Caco-2 (cell line): ENCODE measurements at regions of chr5 and their contacts with region 1.

Region 1: GRCh38 chr5:122515709-122516431 is 203.8 kb downstream of the SNCAIP start:
- DNase-seq: peak; percentile 68 to 71
- H3K4me3 ChIP-seq: peak overlapping the region; percentile 26
- H3K4me3 Mint-ChIP-seq: peak overlapping the region; percentile 91
- H3K27ac Mint-ChIP-seq: peak overlapping the region; percentile 90
- H3K4me1 ChIP-seq: peaks cover 7% of the 10 kb centered on the region
- H3K4me1 Mint-ChIP-seq: no peaks in the 10 kb centered on the region
- H3K27me3 ChIP-seq: no peaks in the 10 kb centered on the region
- H3K27me3 Mint-ChIP-seq: peaks cover 4% of the 10 kb centered on the region
- CTCF ChIP-seq: peak; percentile 72 to 83

Region 2: GRCh38 chr5:122541388-122541787 is 25.5 kb after region 1 on chr5:
- CTCF ChIA-PET with region 1: no interaction called
- POLR2A ChIA-PET with region 1: no interaction called
- intact Hi-C with region 1: no loop called
- DNase-seq: no peak
- H3K4me3 ChIP-seq: no peak overlapping the region
- H3K4me3 Mint-ChIP-seq: no peak overlapping the region
- H3K27ac Mint-ChIP-seq: no peak overlapping the region
- H3K4me1 ChIP-seq: no peaks in the 10 kb centered on the region
- H3K4me1 Mint-ChIP-seq: no peaks in the 10 kb centered on the region
- H3K27me3 ChIP-seq: no peaks in the 10 kb centered on the region
- H3K27me3 Mint-ChIP-seq: peaks cover 10% of the 10 kb centered on the region
- CTCF ChIP-seq: no peak

Region 3: DNA sequence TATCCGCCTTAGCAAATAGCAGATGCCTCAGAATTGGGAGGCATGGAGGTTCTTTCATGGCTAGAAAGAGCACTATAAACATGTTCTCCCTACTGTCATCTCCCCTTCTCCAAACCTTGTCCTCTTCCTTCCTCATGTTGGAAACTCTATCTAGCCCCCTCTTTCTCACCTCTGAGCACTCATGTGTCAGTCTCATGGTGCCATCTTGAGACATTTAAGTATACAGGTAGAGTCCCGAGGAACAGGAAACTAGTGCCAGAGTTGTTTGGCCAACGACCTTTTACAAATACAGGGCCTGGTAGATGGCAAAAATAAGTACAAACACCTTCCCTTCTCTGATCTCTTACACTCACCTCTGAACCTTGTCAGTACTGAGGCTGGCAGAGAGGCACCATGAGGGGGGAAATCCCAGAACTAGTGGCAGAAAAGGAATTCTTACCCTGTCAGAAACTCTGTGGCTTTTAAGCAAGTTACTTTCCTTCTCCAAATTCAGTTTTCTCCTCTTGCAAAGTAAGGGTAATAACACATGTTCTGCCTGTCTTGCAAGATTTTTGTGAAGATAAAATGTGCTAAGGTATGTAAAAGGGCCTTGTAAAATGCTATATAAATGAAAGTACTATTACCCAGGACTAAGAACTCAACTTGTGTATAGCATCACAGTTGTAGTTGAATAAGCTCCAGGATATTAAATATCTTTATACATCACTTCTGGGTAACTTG is 164.9 kb after region 1 on chr5:
- CTCF ChIA-PET with region 1: no interaction called
- POLR2A ChIA-PET with region 1: no interaction called
- intact Hi-C with region 1: loop called (anchors 2 kb)
- DNase-seq: peak in 1 of 2 experiments; percentile 5
- H3K4me3 ChIP-seq: no peak overlapping the region
- H3K4me3 Mint-ChIP-seq: no peak overlapping the region
- H3K27ac Mint-ChIP-seq: no peak overlapping the region
- H3K4me1 ChIP-seq: 0 out of 2 replicates have a peak, but pooled peaks cover 7% of the 10 kb centered on the region
- H3K4me1 Mint-ChIP-seq: no peaks in the 10 kb centered on the region
- H3K27me3 ChIP-seq: no peaks in the 10 kb centered on the region
- H3K27me3 Mint-ChIP-seq: peaks cover 2% of the 10 kb centered on the region
- CTCF ChIP-seq: no peak

Region 4: GRCh38 chr5:122845229-122846050 is 329.6 kb after region 1 on chr5 and contains the start of gene SNX24:
- CTCF ChIA-PET with region 1: no interaction called
- POLR2A ChIA-PET with region 1: no interaction called
- intact Hi-C with region 1: loop called (anchors 2 kb)
- DNase-seq: peak; percentile 86 to 90
- H3K4me3 ChIP-seq: peak within 1 kb of the TSS; percentile 93
- H3K4me3 Mint-ChIP-seq: peak within 1 kb of the TSS; percentile 78
- H3K27ac Mint-ChIP-seq: peak within 1 kb of the TSS; percentile 87
- H3K4me1 ChIP-seq: peaks cover 39% of the 10 kb centered on the region
- H3K4me1 Mint-ChIP-seq: peaks cover 36% of the 10 kb centered on the region
- H3K27me3 ChIP-seq: no peaks in the 10 kb centered on the region
- H3K27me3 Mint-ChIP-seq: no peaks in the 10 kb centered on the region
- CTCF ChIP-seq: no peak
- total RNA-seq, gene SNX24: 36.7 and 38.4 TPM in 2 replicates

Region 5: DNA sequence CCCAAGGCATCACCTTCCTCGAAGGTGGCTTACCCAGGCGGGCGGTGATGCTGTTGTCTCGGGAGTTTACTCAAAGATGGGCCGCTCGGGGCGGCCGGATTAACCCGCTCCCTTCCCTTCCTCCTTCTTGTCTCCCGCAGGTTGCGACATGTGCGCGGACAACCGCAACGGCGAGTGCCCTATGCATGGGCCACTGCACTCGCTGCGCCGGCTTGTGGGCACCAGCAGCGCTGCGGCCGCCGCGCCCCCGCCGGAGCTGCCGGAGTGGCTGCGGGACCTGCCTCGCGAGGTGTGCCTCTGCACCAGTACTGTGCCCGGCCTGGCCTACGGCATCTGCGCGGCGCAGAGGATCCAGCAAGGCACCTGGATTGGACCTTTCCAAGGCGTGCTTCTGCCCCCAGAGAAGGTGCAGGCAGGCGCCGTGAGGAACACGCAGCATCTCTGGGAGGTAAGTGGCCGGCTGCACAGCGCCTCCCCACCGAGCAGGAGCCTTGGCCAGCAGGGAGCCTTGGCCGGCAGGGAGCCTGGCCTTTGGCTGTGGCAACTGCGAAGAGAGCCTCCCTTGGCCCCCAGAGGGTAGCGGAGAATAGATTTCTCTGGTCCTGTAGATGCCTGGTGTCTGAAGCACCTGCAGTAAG is 583.8 kb after region 1 on chr5:
- CTCF ChIA-PET with region 1: no interaction called
- POLR2A ChIA-PET with region 1: no interaction called
- intact Hi-C with region 1: loop called (anchors 2 kb)
- DNase-seq: peak in 1 of 2 experiments; percentile 69
- H3K4me3 ChIP-seq: peak overlapping the region; percentile 40
- H3K4me3 Mint-ChIP-seq: peak overlapping the region; percentile 70
- H3K27ac Mint-ChIP-seq: no peak overlapping the region
- H3K4me1 ChIP-seq: no peaks in the 10 kb centered on the region
- H3K4me1 Mint-ChIP-seq: peaks cover 7% of the 10 kb centered on the region
- H3K27me3 ChIP-seq: no peaks in the 10 kb centered on the region
- H3K27me3 Mint-ChIP-seq: peaks cover 4% of the 10 kb centered on the region
- CTCF ChIP-seq: peak in 1 of 2 experiments; percentile 40

Region 6: GRCh38 chr5:123157791-123158581 is 642.1 kb after region 1 on chr5:
- CTCF ChIA-PET with region 1: no interaction called
- POLR2A ChIA-PET with region 1: no interaction called
- intact Hi-C with region 1: loop called (anchors 5 kb)
- DNase-seq: no peak
- H3K4me3 ChIP-seq: no peak overlapping the region
- H3K4me3 Mint-ChIP-seq: no peak overlapping the region
- H3K27ac Mint-ChIP-seq: no peak overlapping the region
- H3K4me1 ChIP-seq: no peaks in the 10 kb centered on the region; the same call in 1 of the 2 replicates
- H3K4me1 Mint-ChIP-seq: peaks cover 5% of the 10 kb centered on the region
- H3K27me3 ChIP-seq: no peaks in the 10 kb centered on the region
- H3K27me3 Mint-ChIP-seq: peaks cover 4% of the 10 kb centered on the region
- CTCF ChIP-seq: no peak

Region 7: DNA sequence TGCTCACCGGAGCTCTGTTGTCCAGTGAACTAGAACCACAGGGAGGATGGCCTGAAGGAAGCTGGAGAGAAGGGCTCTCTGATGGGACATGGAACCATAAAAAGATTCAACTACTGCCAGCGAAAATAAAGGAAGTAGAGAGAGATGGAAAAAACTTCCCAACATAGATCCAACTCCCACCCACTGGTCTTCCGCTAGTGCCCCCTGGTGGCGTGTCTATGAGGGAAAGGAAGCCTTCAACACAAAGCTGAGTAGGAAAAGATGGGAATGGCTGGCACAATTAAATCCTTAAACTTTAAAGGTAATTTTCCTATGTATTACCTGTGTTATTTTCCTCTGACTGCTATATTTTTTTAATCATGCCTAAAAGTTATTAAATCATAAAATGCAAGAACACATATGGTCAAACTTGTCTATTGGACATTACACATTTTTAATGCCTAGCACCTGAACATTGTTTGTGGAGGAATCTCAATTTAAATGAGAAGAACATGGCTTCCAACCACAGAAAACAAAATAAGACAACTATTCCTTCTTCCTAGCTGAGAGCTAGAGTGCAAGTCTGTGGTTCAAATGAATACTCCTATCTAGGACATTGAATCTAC is 855.8 kb after region 1 on chr5:
- CTCF ChIA-PET with region 1: interaction called, 6 read pairs
- POLR2A ChIA-PET with region 1: no interaction called
- intact Hi-C with region 1: loop called (anchors 2 kb)
- DNase-seq: peak; percentile 49 to 69
- H3K4me3 ChIP-seq: no peak overlapping the region
- H3K4me3 Mint-ChIP-seq: no peak overlapping the region
- H3K27ac Mint-ChIP-seq: no peak overlapping the region
- H3K4me1 ChIP-seq: peaks cover 20% of the 10 kb centered on the region
- H3K4me1 Mint-ChIP-seq: peaks cover 16% of the 10 kb centered on the region
- H3K27me3 ChIP-seq: no peaks in the 10 kb centered on the region
- H3K27me3 Mint-ChIP-seq: no peaks in the 10 kb centered on the region
- CTCF ChIP-seq: peak; percentile 36 to 49